ENCODE measurements at regions of chr16 and their contacts with region 1.

Region 1: GRCh38 chr16:20799599-20799998 is 6.7 kb downstream of the ERI2 start:
- DNase-seq: peak in 2 of 14 experiments; percentile 23
- ATAC-seq: no peak
- H3K4me3 ChIP-seq: no peak overlapping the region
- H3K4me3 Mint-ChIP-seq: no peak overlapping the region
- H3K27ac ChIP-seq: no peak overlapping the region
- H3K27ac Mint-ChIP-seq: no peak overlapping the region
- H3K4me1 ChIP-seq: no peaks in the 10 kb centered on the region
- H3K4me1 Mint-ChIP-seq: peaks cover 15% of the 10 kb centered on the region
- H3K27me3 ChIP-seq: no peaks in the 10 kb centered on the region
- H3K27me3 Mint-ChIP-seq: no peaks in the 10 kb centered on the region
- CTCF ChIP-seq: peak; percentile 67

Region 2: GRCh38 chr16:20844588-20844987 is 45.0 kb after region 1 on chr16:
- CTCF ChIA-PET with region 1: no interaction called
- POLR2A ChIA-PET with region 1: no interaction called
- intact Hi-C with region 1: loop called in 1 of 2 experiments (anchors 2 kb)
- DNase-seq: peak in 5 of 14 experiments; percentile 14 to 50 (median 36)
- ATAC-seq: peak; percentile 82
- H3K4me3 ChIP-seq: no peak overlapping the region
- H3K4me3 Mint-ChIP-seq: peak overlapping the region; percentile 50
- H3K27ac ChIP-seq: peak overlapping the region in 1 of 2 donors; percentile 47
- H3K27ac Mint-ChIP-seq: peak overlapping the region; percentile 62
- H3K4me1 ChIP-seq: peaks cover 16% of the 10 kb centered on the region
- H3K4me1 Mint-ChIP-seq: peaks cover 23% of the 10 kb centered on the region
- H3K27me3 ChIP-seq: no peaks in the 10 kb centered on the region
- H3K27me3 Mint-ChIP-seq: no peaks in the 10 kb centered on the region
- CTCF ChIP-seq: no peak

Region 3: DNA sequence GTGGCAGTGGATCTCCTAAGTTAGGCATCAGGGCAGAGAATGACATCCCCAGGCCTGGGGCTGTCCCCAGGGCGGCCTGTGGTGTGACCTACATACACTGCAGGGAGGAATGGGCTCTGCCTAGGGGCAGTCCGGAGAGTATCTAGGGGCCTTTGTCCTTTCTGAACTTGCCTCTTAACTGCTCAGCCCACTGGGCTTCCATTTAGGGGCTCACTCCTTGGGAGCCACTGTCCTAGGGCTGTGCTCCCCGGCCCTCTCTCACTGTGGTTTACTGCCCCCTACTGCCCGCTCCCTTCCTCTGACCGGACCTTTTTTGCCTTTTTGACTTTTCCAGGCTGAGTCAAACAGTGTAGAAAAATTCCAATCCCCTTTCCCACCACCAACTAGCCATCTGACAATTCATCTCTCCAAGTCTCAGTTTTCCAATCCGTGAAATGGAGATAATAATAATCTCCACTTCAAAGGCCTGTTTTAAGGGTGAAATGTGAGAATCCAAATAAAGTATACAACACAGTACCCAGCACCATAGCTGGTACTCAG is 284.2 kb after region 1 on chr16:
- CTCF ChIA-PET with region 1: no interaction called
- POLR2A ChIA-PET with region 1: no interaction called
- intact Hi-C with region 1: loop called (anchors 2 kb)
- DNase-seq: peak; percentile 13 to 62 (median 34)
- ATAC-seq: peak; percentile 43
- H3K4me3 ChIP-seq: no peak overlapping the region
- H3K4me3 Mint-ChIP-seq: no peak overlapping the region
- H3K27ac ChIP-seq: no peak overlapping the region
- H3K27ac Mint-ChIP-seq: no peak overlapping the region
- H3K4me1 ChIP-seq: no peaks in the 10 kb centered on the region
- H3K4me1 Mint-ChIP-seq: no peaks in the 10 kb centered on the region
- H3K27me3 ChIP-seq: peaks cover under 1 to 10% of the 10 kb centered on the region in 2 experiments
- H3K27me3 Mint-ChIP-seq: peaks cover 18% of the 10 kb centered on the region
- CTCF ChIP-seq: peak; percentile 55

Measured in CD4-positive, alpha-beta T cell (primary cell).